ENCODE measurements at regions of chr4 and their contacts with region 1.

Region 1: DNA sequence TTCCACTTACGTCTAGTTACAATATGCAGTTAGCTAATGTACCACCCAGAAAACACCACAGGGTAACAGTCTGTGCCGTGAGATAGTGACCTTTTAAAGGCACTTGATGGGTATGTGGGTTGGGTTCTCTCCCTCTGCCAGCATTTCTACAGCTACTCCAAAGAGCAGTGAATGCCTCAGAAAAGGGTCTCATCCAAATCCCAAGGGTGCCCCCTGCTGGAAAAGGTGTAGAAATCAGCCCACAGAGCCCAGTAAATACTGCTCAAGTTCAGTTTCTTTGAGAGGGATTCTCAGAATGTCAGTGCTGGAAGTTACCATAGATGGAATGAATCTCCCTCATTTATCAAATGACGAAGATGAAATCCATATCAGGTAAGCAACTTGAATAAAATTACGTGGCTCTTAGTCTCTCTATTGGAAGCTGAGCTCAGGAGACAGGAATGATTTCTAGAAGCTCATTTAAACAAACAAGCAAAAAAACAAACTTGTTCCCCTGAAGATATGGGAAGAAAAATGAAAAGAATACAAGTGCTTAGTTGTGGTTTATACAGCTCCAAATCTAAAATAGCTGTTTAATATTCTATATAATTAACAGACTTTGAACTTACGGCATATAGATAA is 9.5 kb downstream of the RNF175 start:
- DNase-seq: peak; percentile 97
- H3K4me3 Mint-ChIP-seq: no peak overlapping the region
- H3K27ac Mint-ChIP-seq: no peak overlapping the region
- H3K4me1 Mint-ChIP-seq: peaks cover 16% of the 10 kb centered on the region
- H3K27me3 Mint-ChIP-seq: no peaks in the 10 kb centered on the region
- CTCF ChIP-seq: peak; percentile 75

Region 2: GRCh38 chr4:153241970-153242838 is 508.1 kb before region 1 on chr4:
- CTCF ChIA-PET with region 1: no interaction called
- POLR2A ChIA-PET with region 1: no interaction called
- intact Hi-C with region 1: no loop called
- DNase-seq: no peak
- H3K4me3 Mint-ChIP-seq: no peak overlapping the region
- H3K27ac Mint-ChIP-seq: no peak overlapping the region
- H3K4me1 Mint-ChIP-seq: peaks cover 13% of the 10 kb centered on the region
- H3K27me3 Mint-ChIP-seq: no peaks in the 10 kb centered on the region
- CTCF ChIP-seq: no peak

Region 3: DNA sequence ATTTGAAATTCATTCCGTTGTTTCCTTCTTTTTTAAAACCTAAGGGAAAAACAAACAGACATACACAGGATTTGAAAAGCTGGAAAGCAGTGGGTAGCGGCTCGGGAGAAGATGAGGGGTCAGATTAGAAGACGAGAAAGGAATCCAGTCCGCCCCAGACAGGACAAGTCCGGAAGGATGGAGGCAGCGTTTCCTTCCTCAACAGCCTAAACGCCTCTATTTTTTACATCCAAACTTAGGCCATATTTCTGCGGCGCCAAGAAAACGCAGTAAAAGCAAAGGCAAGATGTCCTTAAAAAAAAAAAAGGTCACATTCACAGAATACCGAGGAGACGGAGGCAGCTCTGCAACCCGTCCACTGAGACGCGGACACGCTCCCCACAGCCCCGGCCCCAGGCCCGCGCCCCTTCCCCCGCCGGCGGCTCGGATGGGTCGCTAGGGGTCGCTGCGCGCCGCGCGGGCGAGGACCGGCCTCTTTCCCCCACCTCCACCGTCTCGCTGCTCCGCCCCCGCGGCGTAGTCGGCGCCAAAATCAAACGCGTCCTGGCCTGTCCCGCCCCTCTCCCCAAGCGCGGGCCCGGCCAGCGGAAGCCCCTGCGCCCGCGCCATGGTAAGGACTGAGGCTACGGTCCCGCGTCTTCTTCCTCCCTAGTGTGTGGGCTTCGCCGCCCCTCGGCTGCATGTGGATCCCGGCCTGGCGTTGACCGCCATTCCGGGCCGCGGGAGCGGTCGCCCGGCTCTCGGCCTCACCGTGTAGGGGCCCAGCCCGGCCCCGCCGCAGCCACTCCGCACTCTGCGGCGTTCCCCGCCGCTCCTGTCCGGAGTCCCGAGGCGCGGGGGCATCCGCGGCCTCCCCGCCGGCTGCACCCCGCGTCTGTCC is 405.9 kb before region 1 on chr4 and contains the start of gene MND1:
- CTCF ChIA-PET with region 1: interaction called, 12 read pairs
- POLR2A ChIA-PET with region 1: interaction called, 4 read pairs
- intact Hi-C with region 1: loop called (anchors 1 kb)
- DNase-seq: peak; percentile 84
- H3K4me3 Mint-ChIP-seq: peak within 1 kb of the TSS; percentile 84
- H3K27ac Mint-ChIP-seq: peak within 1 kb of the TSS; percentile 16
- H3K4me1 Mint-ChIP-seq: peaks cover 33% of the 10 kb centered on the region
- H3K27me3 Mint-ChIP-seq: no peaks in the 10 kb centered on the region
- CTCF ChIP-seq: peak; percentile 98
- total RNA-seq, gene MND1: 4.8 and 9.7 TPM in 2 replicates

Region 4: GRCh38 chr4:153634738-153635353 is 115.5 kb before region 1 on chr4:
- CTCF ChIA-PET with region 1: interaction called, 175 read pairs
- POLR2A ChIA-PET with region 1: interaction called, 6 read pairs
- intact Hi-C with region 1: loop called (anchors 1 kb)
- DNase-seq: peak; percentile 63
- H3K4me3 Mint-ChIP-seq: no peak overlapping the region
- H3K27ac Mint-ChIP-seq: no peak overlapping the region
- H3K4me1 Mint-ChIP-seq: no peaks in the 10 kb centered on the region
- H3K27me3 Mint-ChIP-seq: no peaks in the 10 kb centered on the region
- CTCF ChIP-seq: peak; percentile 54

Region 5: GRCh38 chr4:153649572-153649991 is 100.7 kb before region 1 on chr4:
- CTCF ChIA-PET with region 1: interaction called, 50 read pairs
- POLR2A ChIA-PET with region 1: interaction called, 5 read pairs
- intact Hi-C with region 1: loop called (anchors 5 kb)
- DNase-seq: peak; percentile 43
- H3K4me3 Mint-ChIP-seq: no peak overlapping the region
- H3K27ac Mint-ChIP-seq: no peak overlapping the region
- H3K4me1 Mint-ChIP-seq: peaks cover 26% of the 10 kb centered on the region
- H3K27me3 Mint-ChIP-seq: no peaks in the 10 kb centered on the region
- CTCF ChIP-seq: peak; percentile 7

Region 6: DNA sequence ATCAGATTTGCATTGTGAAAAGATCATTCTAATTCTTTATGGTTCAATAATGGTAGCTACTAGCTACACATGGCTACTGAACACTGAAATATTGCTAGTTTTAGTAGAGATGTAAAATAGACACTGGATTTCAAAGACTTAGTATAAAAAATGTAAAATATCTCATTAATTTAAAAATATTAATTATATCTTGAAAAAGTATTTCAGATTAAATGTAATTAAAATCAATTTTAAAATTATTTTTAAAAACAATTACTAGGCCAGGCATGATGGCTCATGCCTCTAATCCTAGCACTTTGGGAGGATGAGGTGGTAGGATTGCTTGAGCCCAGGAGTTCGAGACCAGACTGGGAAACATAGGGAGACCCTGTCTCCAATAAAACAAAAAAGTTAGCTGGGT is 86.6 kb before region 1 on chr4:
- CTCF ChIA-PET with region 1: interaction called, 20 read pairs
- POLR2A ChIA-PET with region 1: no interaction called
- intact Hi-C with region 1: no loop called
- DNase-seq: no peak
- H3K4me3 Mint-ChIP-seq: no peak overlapping the region
- H3K27ac Mint-ChIP-seq: no peak overlapping the region
- H3K4me1 Mint-ChIP-seq: peaks cover 23% of the 10 kb centered on the region
- H3K27me3 Mint-ChIP-seq: no peaks in the 10 kb centered on the region
- CTCF ChIP-seq: no peak

Region 7: GRCh38 chr4:153733751-153734448 is 16.4 kb before region 1 on chr4:
- CTCF ChIA-PET with region 1: interaction called, 15 read pairs
- POLR2A ChIA-PET with region 1: interaction called, 3 read pairs
- intact Hi-C with region 1: no loop called
- DNase-seq: no peak
- H3K4me3 Mint-ChIP-seq: no peak overlapping the region
- H3K27ac Mint-ChIP-seq: peak overlapping the region; percentile 9
- H3K4me1 Mint-ChIP-seq: peaks cover 20% of the 10 kb centered on the region
- H3K27me3 Mint-ChIP-seq: no peaks in the 10 kb centered on the region
- CTCF ChIP-seq: no peak

Measured in MCF 10A (cell line).